Sigmoid colon (tissue), 7 donors: ENCODE measurements at regions of chr9 and their contacts with region 1.

Region 1: GRCh38 chr9:33446946-33447798 is at the start of gene AQP3:
- DNase-seq: peak; percentile 80
- H3K4me3 ChIP-seq: peak within 1 kb of the TSS; percentile 28 to 56 (median 49)
- H3K27ac ChIP-seq: peak within 1 kb of the TSS in 3 of 4 donors; percentile 27 to 53 (median 51)
- H3K4me1 ChIP-seq: peaks cover 0 to 15% (median 14%) of the 10 kb centered on the region in 4 donors
- H3K27me3 ChIP-seq: no peaks in the 10 kb centered on the region
- CTCF ChIP-seq: peak in 1 of 4 experiments; percentile 29
- EP300 ChIP-seq: no peak
- POLR2A ChIP-seq: no peak
- total RNA-seq, gene AQP3: 3.0 to 6.9 (median 4.5) TPM

Region 2: DNA sequence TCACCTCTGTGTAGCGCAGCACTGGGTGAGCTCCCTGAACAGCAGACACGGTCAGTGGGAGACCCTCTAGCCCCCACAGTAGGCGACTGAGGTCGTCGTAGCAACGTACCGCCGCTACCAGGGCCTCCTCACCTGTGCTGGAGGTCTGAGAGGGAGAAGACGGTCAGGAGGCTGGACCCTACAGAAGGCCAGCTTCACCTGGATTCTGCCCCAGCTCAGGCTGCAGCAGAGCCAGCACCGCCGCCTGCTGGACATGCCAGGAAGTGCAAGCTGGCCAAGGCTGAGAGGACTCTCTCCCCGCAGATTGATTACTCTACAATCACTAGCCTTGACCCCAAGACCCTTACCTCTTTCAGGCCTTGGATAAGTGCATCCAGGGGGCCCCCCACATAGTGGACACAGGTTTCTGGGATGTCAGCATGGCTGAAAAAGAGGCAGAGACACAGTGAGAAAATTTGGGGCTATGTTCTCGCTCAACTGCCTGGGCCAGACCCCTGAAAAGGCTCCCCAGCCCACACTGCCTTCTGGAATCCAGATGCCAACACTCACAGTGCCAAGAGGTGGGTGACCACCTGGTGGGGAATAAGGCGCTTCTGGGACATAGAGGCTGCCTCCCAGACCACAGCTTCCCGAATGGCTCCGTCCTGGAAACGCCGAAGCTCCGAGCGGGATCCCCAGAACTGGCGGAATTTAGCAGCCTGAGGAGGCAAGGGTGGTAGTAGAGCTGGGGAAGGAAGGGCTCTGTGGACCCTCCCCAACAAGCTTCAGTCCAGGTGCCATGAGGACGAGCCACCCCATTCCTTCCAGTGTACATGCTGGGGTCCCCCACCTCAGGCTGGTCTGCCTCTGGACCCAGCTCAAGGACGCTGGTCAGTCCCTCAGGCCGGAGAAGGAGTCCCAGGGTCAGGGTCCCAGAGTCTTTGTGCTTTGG is 19.7 kb after region 1 on chr9:
- intact Hi-C with region 1: loop called (anchors 2 kb)
- DNase-seq: peak; percentile 76
- H3K4me3 ChIP-seq: no peak overlapping the region
- H3K27ac ChIP-seq: no peak overlapping the region
- H3K4me1 ChIP-seq: peaks cover 0 to 3% (median 1%) of the 10 kb centered on the region in 4 donors
- H3K27me3 ChIP-seq: no peaks in the 10 kb centered on the region
- CTCF ChIP-seq: peak; percentile 83 to 94 (median 88)
- EP300 ChIP-seq: no peak
- POLR2A ChIP-seq: no peak